Lower lobe of right lung (tissue), 2 donors: ENCODE measurements at regions of chr14 and their contacts with region 1.

Region 1: DNA sequence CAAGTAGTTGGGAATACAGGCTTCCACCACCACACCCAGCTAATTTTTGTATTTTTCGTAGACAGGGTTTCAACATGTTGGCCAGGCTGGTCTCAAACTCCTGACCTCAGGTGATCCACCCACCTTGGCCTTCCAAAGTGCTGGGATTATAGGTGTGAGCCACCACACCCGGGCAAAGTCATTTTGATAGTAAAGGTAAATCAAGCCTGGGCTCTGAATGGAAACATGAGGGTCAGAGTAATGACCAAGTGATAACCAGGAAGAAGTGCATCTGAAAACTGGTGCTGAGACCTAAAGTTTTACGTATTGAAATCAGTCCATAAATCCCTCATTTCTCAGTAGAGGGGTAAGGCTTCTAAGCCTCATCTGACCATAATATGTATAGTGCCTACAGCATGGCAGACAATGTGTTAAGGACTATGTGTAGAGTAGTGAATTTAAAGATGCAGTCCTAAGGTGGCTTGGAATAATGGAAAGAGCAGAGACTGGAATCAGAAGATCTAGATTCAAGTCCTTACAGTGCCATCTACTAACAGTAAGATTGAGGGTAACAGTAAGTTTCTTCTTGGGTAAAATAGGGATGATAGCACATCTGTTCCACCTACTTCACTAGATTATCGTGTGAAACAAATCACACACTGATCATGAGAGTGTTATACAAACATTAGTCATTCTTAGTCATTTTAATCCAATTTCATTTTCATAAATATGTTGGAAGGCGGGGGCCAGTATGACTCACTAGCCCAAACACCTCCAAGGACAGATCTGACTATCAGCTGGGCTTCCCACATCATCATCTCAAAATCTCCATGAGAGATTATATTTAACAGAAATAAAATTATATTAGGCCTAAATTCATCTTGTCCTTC is 11.2 kb downstream of the MAP4K5 start:
- DNase-seq: no peak
- ATAC-seq: peak in 1 of 2 donors; percentile 78
- H3K4me3 ChIP-seq: no peak overlapping the region
- H3K27ac ChIP-seq: no peak overlapping the region
- H3K4me1 ChIP-seq: peaks cover 35% of the 10 kb centered on the region
- H3K27me3 ChIP-seq: no peaks in the 10 kb centered on the region
- CTCF ChIP-seq: no peak

Region 2: GRCh38 chr14:50321009-50321660 is 200.0 kb before region 1 on chr14:
- intact Hi-C with region 1: loop called (anchors 10 kb)
- DNase-seq: no peak
- ATAC-seq: peak; percentile 96 to 98
- H3K4me3 ChIP-seq: peak overlapping the region; percentile 24
- H3K27ac ChIP-seq: peak overlapping the region; percentile 63
- H3K4me1 ChIP-seq: peaks cover 22% of the 10 kb centered on the region
- H3K27me3 ChIP-seq: no peaks in the 10 kb centered on the region
- CTCF ChIP-seq: peak; percentile 85